ENCODE measurements at regions of chr12 and their contacts with region 1.

Region 1: DNA sequence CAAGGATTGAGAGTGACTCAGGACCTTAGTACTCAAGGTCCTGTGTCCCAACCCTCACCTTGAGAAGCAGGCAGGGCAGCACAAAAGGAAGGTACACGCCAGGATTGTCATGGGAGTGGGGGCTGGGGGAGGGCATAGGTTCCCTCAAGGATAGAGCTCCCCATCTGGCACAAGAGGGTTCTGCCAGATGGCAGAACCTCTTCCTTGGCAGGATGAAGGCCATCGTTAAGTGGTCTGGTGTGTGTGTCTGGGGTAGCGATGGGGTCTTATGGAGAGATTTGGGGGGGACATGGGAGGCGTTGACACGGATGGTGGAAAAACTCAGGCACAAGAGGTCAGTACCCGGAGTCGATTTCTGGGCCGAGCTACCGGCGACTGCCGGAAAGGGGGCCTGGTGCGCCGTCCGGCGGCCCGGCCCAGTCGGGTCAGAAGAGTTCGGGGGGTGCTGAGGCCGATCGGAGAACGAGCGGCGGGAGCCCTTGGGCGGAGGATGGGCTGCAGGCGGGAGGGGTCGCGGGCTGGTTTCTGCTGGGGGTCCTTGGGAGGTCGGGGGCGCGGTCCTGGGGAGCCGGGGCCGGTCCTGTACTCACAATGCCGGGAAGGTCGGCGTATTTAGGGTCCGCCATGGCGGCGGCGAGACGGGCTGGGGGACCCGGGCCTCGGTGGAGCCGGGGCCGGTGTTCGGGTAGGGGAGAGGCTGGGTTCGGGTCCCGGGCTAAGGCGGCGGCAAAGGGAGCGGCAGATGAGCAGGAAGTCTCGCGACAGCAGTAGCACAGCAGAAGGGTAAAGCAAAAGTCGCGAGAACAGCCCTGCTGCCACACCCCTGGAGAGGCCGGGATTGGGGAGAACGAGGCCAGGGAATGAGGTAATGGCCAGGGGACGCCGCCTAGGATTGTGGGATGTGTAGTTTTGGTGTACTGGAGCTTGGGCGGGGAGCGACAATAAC is at the start of gene DCTN2:
- DNase-seq: peak; percentile 94
- ATAC-seq: peak; percentile 96
- H3K4me3 ChIP-seq: peak within 1 kb of the TSS; percentile 87 to 96 (median 91)
- H3K27ac ChIP-seq: peak within 1 kb of the TSS; percentile 56
- H3K4me1 ChIP-seq: peaks cover 57% of the 10 kb centered on the region
- H3K27me3 ChIP-seq: peaks cover 0 to 27% of the 10 kb centered on the region in 2 experiments; a peak in 2 of 5 replicates
- CTCF ChIP-seq: no peak; the same call in 1 of the 2 replicates
- EP300 ChIP-seq: no peak; a peak in 1 of 4 replicates
- POLR2A ChIP-seq: peak in 1 of 2 experiments; percentile 30; a peak in 1 of 4 replicates
- RAD21 ChIP-seq: peak; percentile 7; the same call in 1 of the 2 replicates
- total RNA-seq, gene DCTN2: 72.0 and 75.5 TPM in 2 replicates

Region 2: DNA sequence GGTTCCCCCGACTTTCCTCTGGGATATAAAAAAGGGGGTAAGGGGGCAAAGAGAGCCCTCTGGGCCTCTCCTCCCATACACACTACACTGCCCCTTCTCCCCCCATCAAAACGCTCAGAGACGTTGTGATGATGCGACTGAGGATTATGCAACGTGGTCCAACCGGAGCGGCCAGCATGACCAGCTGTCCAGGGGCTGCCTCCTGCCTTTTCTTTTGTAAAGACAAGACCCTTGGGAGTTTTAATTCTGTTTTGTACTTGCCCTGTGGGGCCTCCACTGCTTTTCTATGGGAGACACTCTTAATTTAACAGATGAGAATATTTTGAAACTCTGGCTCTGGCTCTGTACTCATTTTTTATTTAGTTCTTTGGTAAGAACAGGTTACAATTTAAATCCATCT is 16.9 kb before region 1 on chr12:
- CTCF ChIA-PET with region 1: no interaction called
- POLR2A ChIA-PET with region 1: interaction called, 21 read pairs
- in situ Hi-C with region 1: no loop called
- intact Hi-C with region 1: no loop called
- DNase-seq: no peak
- ATAC-seq: no peak
- H3K4me3 ChIP-seq: no peak overlapping the region
- H3K27ac ChIP-seq: no peak overlapping the region
- H3K4me1 ChIP-seq: peaks cover 4% of the 10 kb centered on the region
- H3K27me3 ChIP-seq: no peaks in the 10 kb centered on the region
- CTCF ChIP-seq: no peak
- EP300 ChIP-seq: no peak
- POLR2A ChIP-seq: 0 out of 4 replicates have a peak, but pooled peaks of 1 of the 2 experiments have one; percentile 28
- RAD21 ChIP-seq: no peak

Measured in HepG2 (cell line).